CD4-positive, alpha-beta memory T cell (primary cell): ENCODE measurements at regions of chr17 and their contacts with region 1.

Region 1: DNA sequence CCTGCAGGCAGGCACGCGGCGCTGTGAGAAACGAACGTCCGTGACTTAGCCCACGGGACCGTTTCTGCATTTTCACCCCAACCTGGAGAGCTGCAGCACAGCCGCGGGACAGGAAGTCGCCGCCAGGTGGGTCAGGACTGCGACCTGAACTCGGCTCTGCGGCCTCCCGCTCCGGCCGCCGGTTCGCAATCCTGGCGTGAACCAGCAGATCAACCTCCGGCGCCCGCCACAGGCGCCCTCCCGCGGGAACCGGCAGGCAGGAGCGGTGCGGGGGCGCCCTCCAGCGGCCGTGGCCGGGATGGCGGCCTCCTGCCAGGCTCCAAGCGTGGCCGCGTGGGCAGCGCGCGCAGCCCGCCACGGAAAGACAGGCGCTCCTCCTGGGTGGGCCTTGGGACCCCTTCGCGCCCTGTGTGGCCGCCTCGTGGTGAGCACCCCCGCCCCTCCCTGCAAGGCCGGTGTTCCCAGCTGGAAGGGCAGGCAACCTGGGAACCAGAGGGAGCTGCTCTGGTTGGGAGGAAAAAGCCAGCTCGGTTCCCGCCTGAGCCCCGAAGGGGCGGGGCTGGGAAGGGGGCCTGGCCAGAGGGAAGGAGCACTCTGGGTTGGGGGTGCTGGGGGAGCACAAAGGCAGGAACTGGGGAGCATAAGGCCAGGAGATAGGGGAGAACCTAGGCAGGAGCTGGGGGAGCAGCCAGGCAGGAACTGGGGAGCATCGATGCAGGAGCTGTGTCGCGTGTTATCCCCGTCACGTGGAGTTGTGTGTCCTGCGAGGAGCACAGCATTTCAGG is 28.2 kb downstream of the ACTG1 start:
- DNase-seq: peak; percentile 76 to 90 (median 85)
- H3K4me3 ChIP-seq: peak overlapping the region in 1 of 2 donors; percentile 48
- H3K4me3 Mint-ChIP-seq: peak overlapping the region in 1 of 8 donors; percentile 45
- H3K27ac ChIP-seq: no peak overlapping the region
- H3K27ac Mint-ChIP-seq: no peak overlapping the region
- H3K4me1 ChIP-seq: peaks cover 30% of the 10 kb centered on the region
- H3K4me1 Mint-ChIP-seq: peaks cover 2 to 24% (median 7%) of the 10 kb centered on the region in 4 donors
- H3K27me3 ChIP-seq: peaks cover 22% of the 10 kb centered on the region
- H3K27me3 Mint-ChIP-seq: peaks cover 11 to 20% of the 10 kb centered on the region in 2 donors

Region 2: DNA sequence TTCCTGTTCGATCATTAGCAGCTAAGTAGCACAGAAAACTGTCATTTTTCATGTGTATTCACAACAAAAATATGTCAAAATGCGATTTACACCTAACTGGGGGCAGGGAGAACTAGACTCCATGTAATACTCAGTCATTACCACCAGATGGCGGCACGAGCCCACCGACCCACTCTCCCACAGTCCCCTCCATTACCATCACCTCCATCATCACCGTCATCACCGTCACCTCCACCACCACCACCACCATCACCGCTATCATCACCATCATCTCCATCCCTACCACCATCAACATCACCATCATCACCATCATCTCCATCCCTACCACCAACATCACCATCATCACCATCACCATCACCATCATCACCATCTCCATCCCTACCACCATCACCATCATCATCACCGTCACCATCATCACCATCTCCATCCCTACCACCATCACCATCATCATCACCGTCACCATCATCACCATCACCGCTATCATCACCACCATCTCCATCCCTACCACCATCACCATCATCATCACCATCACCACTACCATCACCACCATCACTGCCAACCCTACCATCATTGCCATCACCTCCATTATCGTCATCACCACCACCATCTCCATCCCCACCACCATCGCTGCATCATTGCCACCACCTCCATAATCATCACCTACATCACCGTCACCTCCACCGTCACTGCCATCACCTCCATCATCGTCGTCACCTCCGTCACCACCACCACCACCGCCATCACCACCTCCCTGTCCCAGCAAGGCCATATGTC is 230.8 kb before region 1 on chr17:
- CTCF ChIA-PET with region 1: interaction called, 20 read pairs
- POLR2A ChIA-PET with region 1: interaction called, 6 read pairs
- intact Hi-C with region 1: loop called (anchors 1 kb)
- DNase-seq: peak; percentile 55 to 64 (median 62)
- H3K4me3 ChIP-seq: no peak overlapping the region
- H3K4me3 Mint-ChIP-seq: peak overlapping the region in 1 of 8 donors; percentile 29
- H3K27ac ChIP-seq: no peak overlapping the region
- H3K27ac Mint-ChIP-seq: peak overlapping the region; percentile 12 to 85 (median 28)
- H3K4me1 ChIP-seq: no peaks in the 10 kb centered on the region
- H3K4me1 Mint-ChIP-seq: peaks cover 7 to 11% (median 8%) of the 10 kb centered on the region in 4 donors
- H3K27me3 ChIP-seq: no peaks in the 10 kb centered on the region
- H3K27me3 Mint-ChIP-seq: no peaks in the 10 kb centered on the region

Region 3: GRCh38 chr17:81394921-81395599 is 89.3 kb before region 1 on chr17 and contains the start of gene BAHCC1:
- CTCF ChIA-PET with region 1: no interaction called
- POLR2A ChIA-PET with region 1: no interaction called
- intact Hi-C with region 1: loop called (anchors 10 kb)
- DNase-seq: peak; percentile 60 to 76 (median 68)
- H3K4me3 ChIP-seq: no peak within 1 kb of the TSS
- H3K4me3 Mint-ChIP-seq: peak within 1 kb of the TSS; percentile 45 to 82 (median 70)
- H3K27ac ChIP-seq: no peak within 1 kb of the TSS
- H3K27ac Mint-ChIP-seq: peak within 1 kb of the TSS in 6 of 7 donors; percentile 37 to 90 (median 72)
- H3K4me1 ChIP-seq: peaks cover 56% of the 10 kb centered on the region
- H3K4me1 Mint-ChIP-seq: peaks cover 10 to 39% (median 22%) of the 10 kb centered on the region in 4 donors
- H3K27me3 ChIP-seq: peaks cover 67% of the 10 kb centered on the region
- H3K27me3 Mint-ChIP-seq: peaks cover 28 to 36% of the 10 kb centered on the region in 2 donors
- total RNA-seq, gene BAHCC1: not detected

Region 4: DNA sequence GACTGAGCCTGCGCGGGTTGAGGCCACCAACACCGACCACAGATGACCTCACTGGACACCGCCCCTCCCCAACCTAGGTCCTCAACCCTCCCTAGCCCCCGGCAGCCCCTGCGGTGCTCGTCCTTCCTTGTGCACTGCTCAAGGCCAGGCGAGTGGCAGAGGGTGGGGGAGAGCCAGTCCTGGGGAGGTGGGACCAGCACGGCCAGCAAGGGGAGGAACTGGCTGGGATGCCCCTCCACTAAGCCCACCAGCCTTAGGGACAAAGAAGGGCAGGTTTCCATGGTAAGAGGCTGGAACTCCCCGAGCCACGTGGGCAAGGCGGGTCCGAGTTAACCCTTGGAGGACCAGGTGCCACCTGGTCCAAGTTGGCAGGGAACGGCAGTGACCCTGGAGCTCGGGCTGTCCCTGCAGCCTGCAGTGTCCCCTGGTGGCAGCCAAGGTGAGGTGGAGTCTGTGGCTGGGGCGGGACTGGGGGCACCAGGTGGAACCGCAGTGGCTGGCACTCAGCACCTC is 53.0 kb after region 1 on chr17:
- CTCF ChIA-PET with region 1: no interaction called
- POLR2A ChIA-PET with region 1: no interaction called
- intact Hi-C with region 1: no loop called
- DNase-seq: peak in 1 of 5 donors; percentile 26
- H3K4me3 ChIP-seq: no peak overlapping the region
- H3K4me3 Mint-ChIP-seq: no peak overlapping the region
- H3K27ac ChIP-seq: no peak overlapping the region
- H3K27ac Mint-ChIP-seq: no peak overlapping the region
- H3K4me1 ChIP-seq: peaks cover 7% of the 10 kb centered on the region
- H3K4me1 Mint-ChIP-seq: no peaks in the 10 kb centered on the region
- H3K27me3 ChIP-seq: peaks cover 3% of the 10 kb centered on the region
- H3K27me3 Mint-ChIP-seq: peaks cover 10% of the 10 kb centered on the region in 2 donors

Region 5: DNA sequence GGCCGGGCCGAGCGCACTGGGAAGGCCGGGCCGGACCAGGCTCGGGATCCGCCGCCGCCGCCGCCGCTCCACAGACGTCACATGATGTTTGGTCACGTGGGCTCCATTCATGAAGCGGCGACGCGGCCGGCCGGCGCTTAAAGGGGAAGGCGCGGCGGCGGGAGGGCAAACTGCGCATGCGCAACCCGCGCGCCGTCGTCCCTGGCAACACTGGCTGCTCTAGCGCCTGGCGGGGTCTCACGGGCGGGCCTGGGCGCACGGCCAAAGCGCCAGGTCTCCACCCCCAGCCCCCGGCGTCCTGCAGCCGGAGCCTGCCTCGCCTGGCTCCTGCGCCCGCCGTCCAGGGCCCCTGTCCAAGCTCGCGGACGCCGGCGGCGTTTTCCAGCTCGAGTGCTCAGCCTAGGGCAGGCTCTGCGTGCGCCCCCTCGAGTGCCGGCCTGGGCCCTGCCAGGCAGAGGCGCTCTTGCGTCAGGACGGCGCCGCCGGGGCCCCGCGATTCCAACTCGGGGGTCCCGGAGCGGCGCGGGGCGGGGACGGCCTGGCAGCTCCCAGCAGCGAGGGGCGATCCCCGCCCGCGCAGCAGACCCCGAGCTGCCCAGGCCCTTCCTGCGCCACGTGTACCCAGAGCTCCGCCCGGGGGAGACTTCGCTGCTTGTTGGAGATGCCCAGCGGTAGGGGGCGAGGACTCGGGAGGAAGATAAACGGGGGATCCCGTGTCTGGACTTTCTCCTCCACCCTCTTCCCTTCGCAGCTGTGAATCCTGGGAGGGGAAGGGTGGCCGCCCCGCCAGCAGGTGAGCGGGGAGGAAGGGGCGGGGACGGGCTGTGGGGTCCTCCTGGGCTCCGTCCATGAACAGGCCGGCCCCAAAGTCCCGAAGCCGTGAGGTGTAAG is 443.5 kb after region 1 on chr17 and contains the start of gene MAFG:
- CTCF ChIA-PET with region 1: no interaction called
- POLR2A ChIA-PET with region 1: no interaction called
- intact Hi-C with region 1: no loop called
- DNase-seq: peak; percentile 85 to 92 (median 90)
- H3K4me3 ChIP-seq: peak within 1 kb of the TSS; percentile 47 to 60
- H3K4me3 Mint-ChIP-seq: peak within 1 kb of the TSS; percentile 81 to 90 (median 84)
- H3K27ac ChIP-seq: peak within 1 kb of the TSS; percentile 68
- H3K27ac Mint-ChIP-seq: peak within 1 kb of the TSS; percentile 84 to 97 (median 90)
- H3K4me1 ChIP-seq: peaks cover 43% of the 10 kb centered on the region
- H3K4me1 Mint-ChIP-seq: peaks cover 12 to 27% (median 20%) of the 10 kb centered on the region in 4 donors
- H3K27me3 ChIP-seq: peaks cover 10% of the 10 kb centered on the region
- H3K27me3 Mint-ChIP-seq: peaks cover 0 to 6% of the 10 kb centered on the region in 2 donors
- total RNA-seq, gene MAFG: 16.0 to 16.3 TPM